Activated CD4-positive, alpha-beta memory T cell treated with anti-CD3 and anti-CD28 coated beads for 36 hours (primary cell): ENCODE measurements at regions of chr5 and their contacts with region 1.

Region 1: GRCh38 chr5:132714456-132715307 is 22.7 kb downstream of the KIF3A start:
- DNase-seq: no peak
- H3K4me3 Mint-ChIP-seq: no peak overlapping the region
- H3K27ac Mint-ChIP-seq: no peak overlapping the region
- H3K4me1 Mint-ChIP-seq: peaks cover 14% of the 10 kb centered on the region
- H3K27me3 Mint-ChIP-seq: no peaks in the 10 kb centered on the region

Region 2: DNA sequence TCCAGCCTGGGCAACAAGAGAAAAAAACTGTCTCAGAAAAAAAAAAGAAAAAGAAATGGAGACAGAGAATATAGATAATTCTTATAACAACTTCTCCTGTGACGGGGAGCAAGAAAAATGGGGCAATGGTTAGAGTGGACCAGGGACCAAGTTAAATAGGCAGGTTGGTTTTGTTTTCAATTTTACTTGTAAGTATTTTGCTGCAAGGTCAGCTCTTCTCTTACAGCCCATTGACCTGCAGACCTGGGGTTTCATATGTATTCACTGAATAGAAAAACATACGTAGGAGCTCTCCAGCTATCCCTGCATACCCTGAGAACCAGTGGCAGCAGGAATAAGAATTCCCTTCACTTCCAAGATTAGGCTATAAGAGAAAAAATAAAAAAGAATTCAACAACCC is 85.9 kb before region 1 on chr5:
- CTCF ChIA-PET with region 1: no interaction called
- POLR2A ChIA-PET with region 1: no interaction called
- intact Hi-C with region 1: no loop called
- DNase-seq: no peak
- H3K4me3 Mint-ChIP-seq: no peak overlapping the region
- H3K27ac Mint-ChIP-seq: no peak overlapping the region
- H3K4me1 Mint-ChIP-seq: peaks cover 17% of the 10 kb centered on the region
- H3K27me3 Mint-ChIP-seq: no peaks in the 10 kb centered on the region

Region 3: DNA sequence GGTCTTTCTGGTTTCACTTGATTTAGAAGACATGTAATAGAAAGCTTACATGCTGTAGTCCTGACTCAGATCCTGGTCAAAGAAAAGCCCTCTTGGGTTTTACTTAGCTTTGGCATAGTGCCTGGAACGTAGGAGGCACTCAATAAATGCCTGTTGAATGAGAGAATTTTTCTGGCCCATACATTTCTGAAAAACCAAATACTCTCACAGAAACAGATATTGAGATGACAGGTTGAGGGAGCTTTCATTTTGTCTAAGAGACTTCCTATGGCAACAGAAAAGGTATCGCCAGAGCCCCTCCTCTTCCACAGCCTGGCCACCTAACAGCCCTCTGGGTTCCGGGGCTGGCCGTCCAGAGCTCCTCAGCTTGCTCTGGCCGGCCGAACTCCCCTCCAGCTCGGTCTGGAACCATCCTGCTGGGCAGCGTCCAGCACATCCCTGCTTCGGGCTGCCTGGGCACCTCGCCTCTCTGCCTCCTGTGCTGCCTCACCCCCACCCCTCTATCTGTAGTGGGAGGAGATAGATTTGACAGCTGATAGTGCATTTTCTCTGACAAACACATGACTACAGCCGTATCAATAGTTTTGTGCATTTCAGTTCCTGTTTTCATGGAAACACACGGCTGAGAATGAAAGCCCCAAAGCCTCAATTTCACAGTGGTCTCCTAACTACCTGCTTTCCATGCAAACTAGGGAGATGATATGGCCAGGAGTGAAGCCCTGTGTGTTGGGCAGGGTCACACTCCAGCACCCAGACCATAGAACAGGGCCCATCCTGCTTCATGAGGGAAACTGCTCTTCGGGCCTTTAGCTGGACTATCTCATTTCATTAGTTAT is 39.8 kb before region 1 on chr5:
- CTCF ChIA-PET with region 1: no interaction called
- POLR2A ChIA-PET with region 1: no interaction called
- intact Hi-C with region 1: loop called (anchors 1 kb)
- DNase-seq: no peak
- H3K4me3 Mint-ChIP-seq: peak overlapping the region; percentile 28
- H3K27ac Mint-ChIP-seq: peak overlapping the region; percentile 73
- H3K4me1 Mint-ChIP-seq: peaks cover 27% of the 10 kb centered on the region
- H3K27me3 Mint-ChIP-seq: no peaks in the 10 kb centered on the region

Region 4: DNA sequence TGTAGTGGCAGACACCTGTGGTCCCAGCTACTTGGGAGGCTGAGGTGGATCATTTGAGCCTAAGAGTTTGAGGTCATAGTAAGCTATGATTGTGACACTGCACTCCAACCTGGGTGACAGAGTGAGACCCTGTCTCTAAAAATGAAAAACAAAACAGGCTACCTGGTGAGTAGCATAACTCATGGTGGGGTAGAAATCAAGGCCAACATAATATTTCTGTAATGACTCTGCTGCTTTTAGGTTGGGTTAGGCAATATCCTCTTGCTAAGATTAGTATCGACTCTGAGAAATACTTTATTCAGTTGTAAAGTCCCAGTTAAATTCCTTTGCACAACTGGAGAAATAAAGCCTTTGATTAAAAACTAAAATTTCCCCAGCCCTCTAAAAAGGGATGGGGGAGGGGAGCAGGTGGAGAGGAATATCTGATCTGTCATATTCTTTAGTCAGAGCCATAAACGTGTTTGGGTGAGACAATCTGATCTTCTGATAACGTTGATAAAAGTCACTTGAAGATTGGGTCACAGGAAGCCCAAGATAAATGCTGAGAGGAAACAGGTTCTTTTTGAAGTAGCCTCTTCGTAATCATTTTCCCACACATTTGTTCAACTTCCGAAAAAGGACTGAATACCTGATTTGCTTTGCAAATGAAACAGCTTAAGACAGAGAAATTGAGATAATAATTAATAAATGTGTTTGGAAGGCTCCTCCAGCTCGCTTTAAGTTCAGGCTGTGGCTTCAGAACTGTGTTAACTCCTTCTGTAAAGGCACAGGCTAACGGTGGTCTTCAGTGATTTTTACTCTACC is 25.9 kb before region 1 on chr5:
- CTCF ChIA-PET with region 1: no interaction called
- POLR2A ChIA-PET with region 1: no interaction called
- intact Hi-C with region 1: loop called (anchors 2 kb)
- DNase-seq: peak; percentile 36
- H3K4me3 Mint-ChIP-seq: no peak overlapping the region
- H3K27ac Mint-ChIP-seq: peak overlapping the region; percentile 24
- H3K4me1 Mint-ChIP-seq: peaks cover 36% of the 10 kb centered on the region
- H3K27me3 Mint-ChIP-seq: no peaks in the 10 kb centered on the region